ENCODE measurements at regions of chr3 and their contacts with region 1.

Region 1: GRCh38 chr3:112111785-112112402 is 21.2 kb downstream of the GCSAM start:
- DNase-seq: peak; percentile 78
- CTCF ChIP-seq: peak; percentile 71

Region 2: DNA sequence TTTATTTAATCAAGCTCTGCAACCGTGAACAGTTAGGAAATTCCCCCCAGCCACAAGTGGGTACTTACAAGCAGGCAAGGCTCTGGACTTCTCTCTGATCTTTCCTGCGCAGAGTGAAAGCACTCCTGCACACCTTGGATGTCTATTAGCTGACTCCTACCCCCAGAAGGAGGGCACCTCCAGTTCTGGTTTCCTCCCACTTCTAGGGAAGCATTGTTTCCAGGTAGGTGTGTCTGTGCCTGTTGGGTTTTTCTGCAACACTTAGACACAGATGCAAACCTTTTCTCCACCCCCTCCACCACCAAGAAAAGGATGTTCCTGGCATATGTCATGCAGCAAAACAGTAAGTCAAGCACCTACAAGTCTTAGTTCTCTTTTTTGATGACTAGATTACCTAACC is 516.7 kb before region 1 on chr3 and contains the start of gene ZBED2:
- CTCF ChIA-PET with region 1: no interaction called
- POLR2A ChIA-PET with region 1: no interaction called
- DNase-seq: peak; percentile 26
- CTCF ChIP-seq: no peak

Region 3: DNA sequence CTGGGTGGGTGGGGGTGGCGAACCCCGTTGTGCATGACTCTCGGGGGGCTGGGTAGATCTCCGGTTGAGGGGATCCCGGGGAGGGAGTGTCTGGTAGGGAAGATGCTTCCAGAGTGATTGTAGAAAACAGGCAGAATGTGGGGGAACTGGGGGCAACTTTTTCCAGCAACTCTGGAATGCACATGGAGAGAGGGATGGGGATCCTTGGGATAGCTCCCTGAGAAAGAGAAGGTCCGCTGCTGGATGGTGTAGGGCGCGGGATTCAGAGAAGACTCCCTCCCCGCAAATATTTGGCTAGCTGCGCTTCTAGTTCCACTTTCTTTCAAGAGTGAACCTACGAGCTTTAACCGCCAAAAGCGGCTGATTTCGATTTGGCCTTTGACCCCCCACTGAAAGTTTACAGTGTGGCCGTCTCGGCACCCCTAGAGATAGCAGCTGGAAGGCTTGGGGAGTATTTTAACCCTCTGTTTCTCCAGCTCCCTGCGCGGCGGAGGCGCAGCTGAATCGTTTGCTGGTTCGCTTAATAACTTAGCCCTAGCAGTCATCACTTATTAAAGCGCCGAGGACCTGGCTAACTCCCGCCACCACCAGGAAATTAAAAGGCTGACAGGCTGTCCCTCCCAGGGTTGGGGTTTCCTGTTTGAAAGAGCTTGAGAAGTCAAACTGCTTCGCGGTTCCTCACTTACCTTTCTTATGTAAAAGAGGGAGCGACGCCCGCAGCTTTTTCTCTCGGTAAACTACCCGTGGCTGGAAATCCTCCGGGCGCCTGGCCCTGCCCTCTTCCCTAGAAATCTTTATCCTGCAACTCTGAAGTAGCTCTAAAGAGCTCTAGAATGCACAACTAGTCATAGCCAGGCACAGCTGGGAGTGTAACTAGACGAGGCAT is 251.7 kb before region 1 on chr3:
- CTCF ChIA-PET with region 1: no interaction called
- POLR2A ChIA-PET with region 1: no interaction called
- DNase-seq: peak; percentile 80
- CTCF ChIP-seq: peak; percentile 15

Region 4: GRCh38 chr3:112097378-112097777 is 14.5 kb before region 1 on chr3:
- CTCF ChIA-PET with region 1: interaction called, 44 read pairs
- POLR2A ChIA-PET with region 1: interaction called, 4 read pairs
- DNase-seq: no peak
- CTCF ChIP-seq: no peak

Region 5: GRCh38 chr3:112136959-112137693 is 25.2 kb after region 1 on chr3:
- CTCF ChIA-PET with region 1: interaction called, 94 read pairs
- POLR2A ChIA-PET with region 1: interaction called, 13 read pairs
- DNase-seq: no peak
- CTCF ChIP-seq: peak; percentile 72

Region 6: DNA sequence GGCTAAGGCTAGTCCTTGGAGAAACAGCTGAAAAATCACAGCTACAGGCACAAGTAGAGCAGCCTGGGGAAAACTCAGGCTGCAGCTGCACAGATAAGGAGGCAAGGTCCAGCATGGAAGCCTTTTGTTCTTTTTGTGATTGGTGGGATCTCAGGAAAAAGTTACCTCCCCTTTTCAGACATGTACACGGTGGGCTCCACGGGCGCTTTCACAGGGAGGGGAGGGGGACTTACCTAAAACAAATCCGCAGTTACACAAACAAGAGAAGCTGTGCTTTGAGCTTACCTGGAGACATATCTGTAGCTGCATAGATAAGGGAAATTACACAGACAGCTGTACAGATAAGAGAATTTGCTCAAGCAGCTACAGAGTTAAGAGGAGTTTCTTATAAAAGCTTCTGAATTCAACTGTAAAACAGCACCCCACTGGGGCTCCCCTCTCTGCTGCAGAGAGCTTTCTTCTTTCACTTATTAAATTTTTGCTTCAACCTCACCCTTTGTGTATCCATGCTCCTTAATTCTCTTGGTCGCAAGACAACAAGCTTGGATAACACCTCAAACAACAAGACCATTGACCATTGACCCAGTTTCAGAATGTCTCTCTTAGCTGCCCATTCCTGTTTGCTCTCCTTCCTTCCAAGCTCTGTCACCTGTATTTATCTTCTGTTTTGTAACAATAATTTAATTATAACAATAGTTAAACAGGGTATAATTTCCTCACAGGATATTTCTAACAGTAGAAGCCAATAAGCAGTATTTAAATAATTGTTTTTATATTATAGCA is 210.2 kb after region 1 on chr3:
- CTCF ChIA-PET with region 1: interaction called, 11 read pairs
- POLR2A ChIA-PET with region 1: no interaction called
- DNase-seq: no peak
- CTCF ChIP-seq: no peak

Region 7: DNA sequence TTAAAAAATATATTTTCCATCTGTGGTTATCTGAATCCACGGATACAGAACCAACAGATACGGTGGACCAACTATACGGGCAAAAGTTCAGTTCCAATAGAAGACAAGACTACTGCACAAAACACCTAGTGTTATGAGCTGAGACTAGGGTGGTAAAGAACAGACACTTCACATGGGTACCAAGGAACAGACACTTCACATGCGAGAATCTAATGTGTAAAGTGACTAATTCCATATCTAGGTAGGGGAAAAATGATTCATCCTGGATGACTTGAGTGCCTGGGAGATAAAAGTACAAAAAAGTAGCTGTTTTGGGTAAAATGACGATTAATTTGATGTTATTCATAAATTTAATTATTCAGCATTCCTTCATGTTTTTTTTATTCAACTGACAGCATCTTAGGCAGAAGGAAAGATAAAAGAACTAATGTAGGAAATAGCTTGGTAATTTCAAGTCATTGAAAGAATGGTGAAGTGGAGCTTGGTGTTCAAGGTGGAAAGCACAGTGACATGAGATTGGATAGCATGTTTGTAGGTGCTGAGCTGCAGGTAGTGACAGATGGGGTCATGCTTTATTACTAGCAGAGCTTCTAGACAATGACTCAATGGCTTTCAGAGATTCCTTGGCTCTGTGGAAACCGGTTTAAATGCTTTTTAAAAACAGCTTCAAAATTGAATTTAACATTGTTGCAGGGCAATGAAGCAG is 226.3 kb after region 1 on chr3:
- CTCF ChIA-PET with region 1: interaction called, 13 read pairs
- POLR2A ChIA-PET with region 1: interaction called, 3 read pairs
- DNase-seq: no peak
- CTCF ChIP-seq: no peak

Region 8: DNA sequence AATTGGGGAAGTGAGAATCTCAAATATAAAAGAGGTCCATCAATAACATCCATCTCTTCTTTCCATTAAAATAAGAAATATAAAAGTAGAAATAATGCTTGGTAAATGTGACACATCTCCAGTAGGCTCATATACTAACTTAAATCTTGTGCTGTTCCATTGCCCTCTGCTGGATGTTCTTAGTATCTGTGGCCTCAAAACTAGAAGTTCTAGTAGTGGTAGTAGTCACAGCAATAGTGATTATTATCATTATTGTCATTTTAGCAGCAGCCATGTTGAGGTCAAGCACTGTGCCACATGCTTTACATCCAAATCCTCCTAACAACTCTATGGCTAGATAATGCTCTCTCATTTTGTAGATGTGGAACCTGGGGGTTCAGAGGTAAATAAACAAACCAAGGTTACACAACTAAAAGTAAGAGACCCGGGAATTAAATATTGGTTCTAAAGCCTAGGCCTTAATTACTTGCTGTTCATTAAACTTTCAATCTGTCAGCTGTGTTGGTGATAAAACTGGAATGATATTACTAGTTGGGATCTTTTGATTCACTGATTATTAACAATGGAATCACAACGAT is 407.6 kb after region 1 on chr3:
- CTCF ChIA-PET with region 1: interaction called, 15 read pairs
- POLR2A ChIA-PET with region 1: no interaction called
- DNase-seq: peak; percentile 59
- CTCF ChIP-seq: peak; percentile 62

Region 9: DNA sequence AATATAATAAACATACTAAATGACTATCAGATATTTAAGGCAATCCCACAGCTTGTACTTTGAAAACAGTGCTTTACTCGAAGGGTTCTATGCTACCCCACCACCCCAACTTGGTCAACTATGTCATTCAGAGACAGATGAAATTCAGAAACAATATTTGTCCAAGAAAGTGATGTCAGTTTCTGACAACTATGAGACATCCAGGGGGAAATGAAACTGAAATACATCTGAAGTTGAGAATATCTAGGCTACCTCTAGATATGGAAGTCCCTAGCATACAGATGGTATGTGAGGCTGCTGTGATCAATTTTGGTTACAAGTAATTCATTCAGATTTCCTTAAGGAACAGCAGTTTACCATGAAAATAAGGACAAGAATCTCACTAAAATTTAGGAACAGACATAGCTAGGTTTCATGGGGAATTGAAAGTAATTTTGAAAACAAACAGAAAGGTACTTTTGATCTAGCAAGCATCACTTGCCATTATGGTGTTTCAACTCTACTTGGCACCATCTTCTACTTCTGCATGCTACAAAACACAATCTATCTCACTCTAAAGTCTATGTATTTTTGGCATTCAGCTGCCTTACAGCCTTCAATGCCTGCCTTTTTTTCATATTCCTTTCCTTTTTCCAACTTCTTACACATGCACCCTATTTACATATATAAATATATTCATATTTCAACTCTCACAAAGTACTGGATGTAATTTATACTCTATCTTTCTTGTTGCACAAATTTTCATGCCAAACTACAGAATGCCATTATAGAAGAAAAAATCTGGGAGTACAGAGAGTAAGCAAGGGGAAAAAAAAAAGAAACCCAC is 428.1 kb after region 1 on chr3:
- CTCF ChIA-PET with region 1: interaction called, 13 read pairs
- POLR2A ChIA-PET with region 1: no interaction called
- DNase-seq: peak; percentile 56
- CTCF ChIP-seq: no peak

Measured in GM10248 (cell line).